HEK293 (cell line): ENCODE measurements at regions of chr21 and their contacts with region 1.

Region 1: DNA sequence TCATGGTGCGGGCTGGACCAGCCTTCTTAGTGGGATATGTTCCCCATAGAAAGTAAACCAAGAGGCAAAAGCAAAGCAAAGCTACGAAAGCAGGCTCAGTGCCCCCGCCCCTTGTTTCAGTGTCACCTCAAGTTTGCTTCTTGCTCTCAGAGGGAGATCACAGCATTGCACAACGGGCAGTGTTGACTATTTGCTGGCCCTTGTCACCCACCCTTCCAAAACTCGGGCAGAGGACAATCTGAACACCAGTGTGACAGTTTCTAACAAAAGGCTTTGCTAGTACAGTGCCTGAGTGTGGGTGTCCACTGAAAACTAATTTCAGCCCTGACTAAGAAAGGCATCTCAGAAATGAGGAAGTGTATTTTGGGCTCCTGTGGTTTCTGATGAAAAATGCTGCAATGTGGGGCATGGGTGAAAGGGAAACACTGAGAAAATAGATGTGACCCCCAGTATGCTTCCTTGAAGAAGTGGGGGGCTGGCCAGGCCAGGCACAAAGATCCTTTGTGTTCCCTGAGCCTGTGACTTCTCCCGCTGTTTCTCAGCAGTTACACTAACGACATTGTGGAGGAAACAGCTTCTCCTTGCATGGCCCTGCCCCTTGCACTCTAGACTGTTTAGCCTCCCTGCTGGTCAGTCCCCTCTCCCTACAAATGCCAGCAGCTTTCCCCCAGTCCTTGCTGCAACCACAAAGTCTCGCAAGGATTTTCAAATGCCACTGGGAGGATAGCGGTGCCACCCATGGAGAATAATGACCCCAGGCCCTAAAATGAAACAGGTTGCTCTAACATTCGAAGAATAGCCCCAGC is 33.3 kb upstream of the KCNE1 start:
- H3K4me3 ChIP-seq: no peak overlapping the region
- H3K27ac ChIP-seq: no peak overlapping the region
- H3K4me1 ChIP-seq: no peaks in the 10 kb centered on the region
- CTCF ChIP-seq: no peak

Region 2: DNA sequence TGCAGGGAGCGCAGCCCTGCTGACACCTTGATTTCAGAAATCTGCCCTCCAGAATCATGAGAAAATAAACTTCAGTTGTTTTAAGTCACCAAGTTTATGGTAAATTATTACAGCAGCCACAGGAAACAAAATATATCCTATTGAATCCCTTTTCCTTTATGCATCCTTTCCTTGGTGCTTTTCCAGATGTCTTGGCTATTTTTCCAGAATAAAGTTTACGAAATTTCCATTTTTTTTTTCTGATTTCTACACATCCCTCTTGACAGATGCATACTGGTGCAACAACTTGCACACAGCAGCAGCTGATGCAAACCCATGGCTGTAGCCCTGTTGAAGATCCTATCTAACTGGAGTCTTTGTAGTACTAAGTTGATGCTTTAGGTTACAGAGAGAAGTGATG is 292.5 kb before region 1 on chr21:
- CTCF ChIA-PET with region 1: no interaction called
- POLR2A ChIA-PET with region 1: no interaction called
- H3K4me3 ChIP-seq: no peak overlapping the region
- H3K27ac ChIP-seq: no peak overlapping the region
- H3K4me1 ChIP-seq: no peaks in the 10 kb centered on the region
- CTCF ChIP-seq: no peak

Region 3: DNA sequence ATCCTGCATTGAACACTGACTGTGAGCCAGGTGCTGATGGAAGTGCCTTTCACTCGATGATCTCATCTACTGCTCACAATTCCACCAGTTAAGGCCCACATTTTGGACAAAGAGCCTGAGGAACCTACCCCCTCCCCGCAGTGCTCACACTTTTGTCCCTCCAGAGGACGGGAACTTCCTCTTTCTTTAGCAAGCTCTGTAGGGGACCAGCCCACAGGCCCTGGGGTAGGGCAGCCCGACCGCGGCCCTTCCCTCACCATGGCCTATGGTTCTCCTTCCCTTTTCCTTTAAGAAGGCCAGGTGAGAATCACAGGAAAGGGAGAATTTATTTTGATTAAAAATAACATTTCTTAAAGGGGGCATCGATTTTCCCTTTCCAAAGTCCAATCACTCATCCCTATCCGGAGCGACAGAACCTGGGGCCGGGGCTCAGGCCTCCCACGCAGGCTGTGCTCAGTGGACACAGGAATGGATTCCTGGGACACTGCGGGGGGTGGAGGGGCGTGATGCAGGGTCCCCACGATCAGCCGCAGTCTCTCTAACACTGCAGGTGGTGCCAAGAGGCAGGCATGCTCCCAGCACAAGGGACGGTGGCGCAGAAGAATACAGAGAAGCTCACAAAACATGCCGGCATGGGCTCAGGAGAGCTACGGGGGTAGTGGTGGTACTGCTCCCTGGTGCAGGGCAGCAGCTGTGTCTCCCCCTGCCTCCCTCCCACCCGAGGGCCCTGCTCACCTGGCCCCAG is 24.3 kb before region 1 on chr21:
- CTCF ChIA-PET with region 1: interaction called, 16 read pairs
- POLR2A ChIA-PET with region 1: no interaction called
- H3K4me3 ChIP-seq: no peak overlapping the region
- H3K27ac ChIP-seq: no peak overlapping the region
- H3K4me1 ChIP-seq: peaks cover under 1% of the 10 kb centered on the region
- CTCF ChIP-seq: no peak

Region 4: DNA sequence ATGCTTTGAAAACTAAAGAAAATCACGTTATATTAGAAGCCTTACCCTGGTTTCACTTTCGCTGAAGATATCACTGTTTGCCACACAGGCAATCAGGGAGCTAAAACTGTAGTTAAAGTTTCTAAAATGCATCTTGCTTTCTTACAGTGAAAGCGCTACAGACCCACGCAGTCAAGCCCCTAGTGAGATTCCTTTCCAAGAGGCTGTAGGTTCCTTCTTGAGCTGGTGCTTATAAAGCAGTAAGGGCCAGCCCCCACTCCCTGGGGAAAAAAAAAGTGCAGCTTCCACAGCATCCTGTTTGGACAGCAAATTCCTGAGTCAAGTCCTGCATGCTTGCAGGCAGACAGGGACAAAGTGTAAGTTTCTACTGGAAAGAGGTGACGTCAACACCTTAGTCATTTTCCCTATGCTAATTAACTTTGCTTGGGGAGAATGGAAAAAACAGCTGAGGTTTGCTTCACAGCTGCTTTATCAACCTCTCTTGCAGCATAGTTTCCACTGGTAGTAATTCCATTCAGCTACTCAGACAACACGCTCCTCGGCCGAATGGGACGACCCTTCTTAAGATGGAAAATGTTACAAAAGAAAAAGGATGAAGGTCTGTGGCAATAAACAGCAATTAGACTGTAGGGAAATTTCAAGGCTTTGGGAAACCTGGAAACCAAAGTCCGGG is 18.5 kb before region 1 on chr21:
- CTCF ChIA-PET with region 1: interaction called, 16 read pairs
- POLR2A ChIA-PET with region 1: no interaction called
- H3K4me3 ChIP-seq: peak overlapping the region; percentile 18
- H3K27ac ChIP-seq: peak overlapping the region; percentile 32; the same call in 1 of the 2 replicates
- H3K4me1 ChIP-seq: peaks cover 8% of the 10 kb centered on the region
- CTCF ChIP-seq: no peak

Region 5: GRCh38 chr21:34561806-34562205 is 16.5 kb after region 1 on chr21:
- CTCF ChIA-PET with region 1: interaction called, 10 read pairs
- POLR2A ChIA-PET with region 1: no interaction called
- H3K4me3 ChIP-seq: no peak overlapping the region
- H3K27ac ChIP-seq: no peak overlapping the region
- H3K4me1 ChIP-seq: no peaks in the 10 kb centered on the region
- CTCF ChIP-seq: no peak

Region 6: GRCh38 chr21:34670220-34670961 is 125.1 kb after region 1 on chr21:
- CTCF ChIA-PET with region 1: no interaction called
- POLR2A ChIA-PET with region 1: no interaction called
- H3K4me3 ChIP-seq: peak overlapping the region; percentile 18
- H3K27ac ChIP-seq: no peak overlapping the region
- H3K4me1 ChIP-seq: no peaks in the 10 kb centered on the region
- CTCF ChIP-seq: no peak

Region 7: GRCh38 chr21:34762761-34763160 is 217.5 kb after region 1 on chr21:
- CTCF ChIA-PET with region 1: no interaction called
- POLR2A ChIA-PET with region 1: no interaction called
- H3K4me3 ChIP-seq: no peak overlapping the region
- H3K27ac ChIP-seq: no peak overlapping the region
- H3K4me1 ChIP-seq: no peaks in the 10 kb centered on the region
- CTCF ChIP-seq: no peak